ENCODE measurements at regions of chr19 and their contacts with region 1.

Region 1: DNA sequence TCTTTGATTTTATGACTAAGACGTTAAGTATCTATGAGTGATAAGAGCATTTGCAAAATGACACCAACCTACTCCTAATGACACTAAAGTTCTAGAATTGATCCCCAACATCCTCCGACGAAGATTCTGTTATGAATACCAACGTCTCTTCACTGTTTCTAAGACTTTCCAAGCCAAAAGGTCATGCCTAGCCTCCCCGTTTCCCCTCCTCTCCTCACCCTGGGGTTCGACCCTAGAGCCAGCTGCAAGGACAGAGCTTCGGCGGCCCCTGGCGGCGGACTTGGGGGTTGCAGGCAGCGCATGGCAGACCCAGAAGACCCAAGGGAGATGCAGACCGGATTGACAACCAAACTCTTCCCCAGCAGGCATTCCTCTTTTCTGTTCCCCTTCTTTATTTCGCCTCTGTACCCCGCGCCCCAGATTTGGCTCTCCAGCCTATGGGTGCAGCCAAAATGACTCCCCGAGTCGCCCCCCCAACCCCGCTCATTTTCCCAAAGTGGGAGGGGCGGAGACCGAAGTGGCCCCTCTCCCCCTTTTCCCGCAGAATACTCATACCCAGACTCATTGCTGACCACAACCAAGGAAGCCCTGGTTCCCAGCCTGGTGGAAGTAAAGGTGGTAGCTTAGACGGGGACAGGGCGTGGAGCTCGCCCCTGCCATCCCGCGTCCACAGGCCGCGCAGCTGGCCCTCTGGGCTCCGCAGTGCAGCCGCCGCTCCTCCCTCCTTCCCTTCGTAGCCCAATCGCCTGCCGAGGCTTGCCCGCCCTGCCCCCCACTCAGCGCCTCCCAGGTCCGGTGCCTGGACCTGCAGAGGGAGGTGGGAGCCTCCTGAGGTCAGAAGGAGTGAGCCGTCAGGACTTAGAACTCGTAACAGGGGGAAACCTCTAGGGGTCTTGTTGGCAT is 4.1 kb upstream of the EML2 start:
- DNase-seq: peak; percentile 76

Region 2: DNA sequence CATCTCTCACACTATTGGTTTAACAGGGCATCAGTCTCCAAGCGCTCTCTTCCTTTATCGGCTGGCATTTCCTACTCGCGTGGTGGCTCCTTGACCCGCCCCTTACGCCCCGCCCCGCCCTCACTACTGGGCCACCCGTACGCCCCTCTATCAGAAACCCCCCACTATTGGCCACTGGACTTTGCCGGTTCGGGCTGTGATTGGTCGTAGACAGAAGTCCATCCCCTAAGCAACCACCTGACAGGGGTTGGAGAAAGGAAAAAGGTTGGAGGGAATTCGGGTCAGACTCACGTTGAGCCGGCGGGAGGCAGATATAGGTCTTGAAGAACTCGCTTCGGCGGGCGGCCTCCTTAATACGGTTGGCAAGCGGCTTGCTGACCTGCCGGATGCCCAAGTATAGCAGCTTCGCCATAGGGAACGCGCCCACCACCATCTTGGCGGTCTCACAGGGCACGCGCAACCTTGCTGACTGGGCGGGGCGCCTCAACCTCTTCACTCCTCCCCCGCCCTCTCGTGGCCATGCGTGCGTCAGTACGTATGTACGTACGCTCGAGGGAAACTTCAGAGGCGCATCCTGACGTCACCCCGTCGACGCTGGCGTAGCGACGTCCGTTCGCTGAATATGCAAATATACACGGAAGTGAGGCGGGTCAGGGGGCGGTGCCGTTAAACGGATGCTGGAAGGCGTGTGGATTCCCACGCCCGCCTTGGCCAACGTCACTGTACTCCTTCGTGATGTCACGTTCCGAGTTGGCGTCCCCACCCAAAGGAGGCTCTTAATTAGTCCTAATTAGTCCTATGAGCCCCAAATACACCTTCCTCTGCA is 58.7 kb before region 1 on chr19 and contains the start of gene OPA3:
- CTCF ChIA-PET with region 1: interaction called, 6 read pairs
- POLR2A ChIA-PET with region 1: interaction called, 28 read pairs
- DNase-seq: peak; percentile 97

Region 3: DNA sequence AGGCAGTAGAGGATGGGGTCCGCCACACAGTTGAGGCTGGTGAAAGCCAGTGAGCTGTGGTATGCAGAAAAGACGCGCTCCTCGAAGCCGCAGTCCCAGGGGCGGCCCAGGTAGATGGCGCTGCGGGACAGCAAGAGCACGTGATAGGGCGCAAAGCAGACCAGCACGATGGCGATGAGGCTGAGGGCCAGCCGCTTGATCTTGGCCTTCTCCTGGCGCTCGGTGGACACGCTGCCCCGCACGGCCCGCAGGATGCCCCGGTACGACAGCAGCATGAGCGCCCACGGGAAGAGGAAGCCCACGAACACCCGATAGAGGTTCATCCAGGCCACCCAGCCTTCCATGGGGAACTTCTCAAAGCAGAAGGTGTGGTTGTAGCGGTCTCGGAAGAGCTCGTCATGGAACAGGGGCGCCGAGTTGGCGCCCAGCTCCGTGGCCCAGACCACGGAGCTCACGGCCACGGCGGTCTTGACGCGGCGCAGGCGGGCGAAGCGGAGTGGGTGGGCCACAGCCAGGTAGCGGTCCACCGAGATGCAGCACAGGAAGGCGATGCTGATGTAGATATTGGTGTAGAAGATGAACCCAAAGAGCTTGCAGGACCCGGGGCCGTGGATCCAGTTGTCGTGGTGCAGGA is 52.2 kb before region 1 on chr19:
- CTCF ChIA-PET with region 1: interaction called, 15 read pairs
- POLR2A ChIA-PET with region 1: interaction called, 28 read pairs
- DNase-seq: peak; percentile 57

Region 4: GRCh38 chr19:45607071-45608029 is 35.9 kb before region 1 on chr19:
- CTCF ChIA-PET with region 1: interaction called, 14 read pairs
- POLR2A ChIA-PET with region 1: interaction called, 11 read pairs
- DNase-seq: peak; percentile 75

Region 5: GRCh38 chr19:45615795-45616708 is 27.2 kb before region 1 on chr19:
- CTCF ChIA-PET with region 1: interaction called, 11 read pairs
- POLR2A ChIA-PET with region 1: interaction called, 18 read pairs
- DNase-seq: peak; percentile 97

Region 6: GRCh38 chr19:45782820-45783785 is 139.8 kb after region 1 on chr19:
- CTCF ChIA-PET with region 1: no interaction called
- POLR2A ChIA-PET with region 1: no interaction called
- DNase-seq: no peak

Measured in HEK293T (cell line).